Head of caudate nucleus (tissue), 42 donors: ENCODE measurements at regions of chr3 and their contacts with region 1.

Region 1: DNA sequence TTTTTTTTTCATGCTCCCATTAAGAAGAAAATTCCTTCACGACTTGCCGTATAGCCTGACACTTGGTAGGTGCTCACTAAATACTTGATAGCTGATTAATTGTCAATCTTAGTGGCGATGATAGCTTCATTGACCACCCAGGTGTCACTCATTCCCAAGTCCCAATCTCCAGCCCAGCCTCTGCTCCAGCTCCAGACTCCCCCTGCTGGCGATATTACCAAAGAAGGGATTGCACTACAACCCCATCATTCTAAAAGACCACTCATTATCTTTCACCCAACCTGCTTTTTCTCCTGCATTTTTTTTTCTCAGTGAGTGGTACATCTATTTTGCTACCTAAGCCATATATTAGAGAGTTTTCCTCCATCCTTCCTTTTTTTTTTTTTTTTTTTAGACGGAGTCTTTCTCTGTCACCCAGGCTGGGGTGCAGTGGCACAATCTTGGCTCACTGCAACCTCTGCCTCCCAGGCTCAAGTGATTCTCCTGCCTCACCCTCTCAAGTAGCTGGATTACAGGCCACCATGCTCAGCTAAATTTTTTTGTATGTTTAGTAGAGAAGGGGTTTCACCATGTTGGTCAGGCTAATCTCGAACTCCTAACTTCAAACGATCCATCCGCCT is 19.5 kb upstream of the COMMD2 start:
- DNase-seq: peak in 36 of 42 donors; percentile 7 to 87 (median 50)

Region 2: GRCh38 chr3:149596136-149596770 is 175.5 kb before region 1 on chr3:
- intact Hi-C with region 1: no loop called
- DNase-seq: no peak

Region 3: DNA sequence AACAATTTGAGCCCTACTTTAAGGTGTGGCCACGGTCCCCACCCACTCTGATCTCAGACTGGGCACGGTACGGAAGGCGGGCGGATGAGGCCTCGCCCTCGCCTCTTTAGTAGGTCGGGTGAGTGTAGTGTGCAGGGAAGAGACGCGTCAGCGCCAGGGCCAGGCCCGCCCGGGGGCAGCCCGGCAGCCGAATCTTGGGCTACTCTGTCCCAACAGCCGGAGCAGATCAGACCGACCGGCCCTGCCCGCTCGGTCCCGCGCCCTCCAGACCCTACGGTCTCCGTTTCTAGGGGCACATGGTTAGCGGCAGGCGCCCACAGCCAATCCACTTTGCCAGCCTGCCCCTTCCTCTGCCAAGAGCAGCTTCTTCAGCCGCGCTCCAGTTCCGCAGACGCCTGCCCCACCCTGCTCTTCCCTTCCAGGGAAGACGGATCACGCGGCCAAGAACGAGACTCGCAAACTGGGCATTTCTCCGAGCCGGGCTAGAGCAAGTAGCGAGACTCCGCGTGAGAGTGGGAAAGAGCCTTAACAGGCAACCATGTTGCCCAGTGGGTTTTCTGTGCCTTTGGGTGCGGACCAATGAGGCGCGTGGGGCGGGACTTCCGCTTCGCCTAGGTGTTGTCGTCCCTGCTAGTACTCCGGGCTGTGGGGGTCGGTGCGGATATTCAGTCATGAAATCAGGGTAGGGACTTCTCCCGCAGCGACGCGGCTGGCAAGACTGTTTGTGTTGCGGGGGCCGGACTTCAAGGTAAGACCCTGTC is 41.0 kb after region 1 on chr3 and contains the start of gene RNF13:
- intact Hi-C with region 1: loop called (anchors 5 kb)
- DNase-seq: peak; percentile 97 to 100 (median 99)